ENCODE measurements at regions of chr2 and their contacts with region 1.

Region 1: DNA sequence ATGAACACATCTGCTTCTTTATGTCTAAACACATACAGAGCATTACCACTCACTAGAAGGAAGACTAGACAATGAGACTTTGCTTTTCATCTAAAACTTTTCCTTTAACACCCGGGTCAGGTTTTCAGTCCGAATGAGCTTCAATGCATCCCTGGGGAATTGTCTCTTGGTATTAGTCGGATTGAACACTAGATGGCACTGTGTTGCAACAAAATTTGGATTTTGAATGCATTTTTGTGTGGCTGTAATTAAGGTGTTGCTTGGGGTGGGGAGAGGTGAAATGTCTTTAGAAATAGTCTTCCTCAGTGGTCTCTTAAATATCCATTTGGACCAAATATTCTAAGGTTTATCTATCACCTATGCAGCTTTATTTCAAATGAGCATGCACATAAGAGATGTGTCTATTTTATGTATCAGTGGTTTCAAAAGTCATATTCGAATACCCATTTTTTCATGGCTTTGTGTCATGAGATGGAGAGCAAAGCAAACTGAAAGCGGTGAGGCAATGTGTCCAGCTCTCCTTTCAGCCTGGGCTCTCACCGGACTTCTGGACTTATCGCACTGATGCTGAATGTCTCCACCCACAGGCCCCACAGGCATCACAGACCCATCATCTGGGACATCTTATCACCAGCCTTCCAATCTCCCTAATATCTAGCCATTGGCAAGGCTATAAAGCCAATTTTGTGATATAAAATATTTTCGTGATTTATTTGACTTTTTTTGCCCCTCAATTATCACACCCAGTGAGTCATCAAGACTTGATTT is 510.3 kb downstream of the RNF144A start:
- DNase-seq: no peak
- ATAC-seq: peak; percentile 40
- H3K4me3 Mint-ChIP-seq: no peak overlapping the region
- H3K27ac Mint-ChIP-seq: no peak overlapping the region
- H3K4me1 Mint-ChIP-seq: peaks cover 7% of the 10 kb centered on the region
- H3K27me3 Mint-ChIP-seq: peaks cover 47% of the 10 kb centered on the region
- CTCF ChIP-seq: peak; percentile 19

Region 2: DNA sequence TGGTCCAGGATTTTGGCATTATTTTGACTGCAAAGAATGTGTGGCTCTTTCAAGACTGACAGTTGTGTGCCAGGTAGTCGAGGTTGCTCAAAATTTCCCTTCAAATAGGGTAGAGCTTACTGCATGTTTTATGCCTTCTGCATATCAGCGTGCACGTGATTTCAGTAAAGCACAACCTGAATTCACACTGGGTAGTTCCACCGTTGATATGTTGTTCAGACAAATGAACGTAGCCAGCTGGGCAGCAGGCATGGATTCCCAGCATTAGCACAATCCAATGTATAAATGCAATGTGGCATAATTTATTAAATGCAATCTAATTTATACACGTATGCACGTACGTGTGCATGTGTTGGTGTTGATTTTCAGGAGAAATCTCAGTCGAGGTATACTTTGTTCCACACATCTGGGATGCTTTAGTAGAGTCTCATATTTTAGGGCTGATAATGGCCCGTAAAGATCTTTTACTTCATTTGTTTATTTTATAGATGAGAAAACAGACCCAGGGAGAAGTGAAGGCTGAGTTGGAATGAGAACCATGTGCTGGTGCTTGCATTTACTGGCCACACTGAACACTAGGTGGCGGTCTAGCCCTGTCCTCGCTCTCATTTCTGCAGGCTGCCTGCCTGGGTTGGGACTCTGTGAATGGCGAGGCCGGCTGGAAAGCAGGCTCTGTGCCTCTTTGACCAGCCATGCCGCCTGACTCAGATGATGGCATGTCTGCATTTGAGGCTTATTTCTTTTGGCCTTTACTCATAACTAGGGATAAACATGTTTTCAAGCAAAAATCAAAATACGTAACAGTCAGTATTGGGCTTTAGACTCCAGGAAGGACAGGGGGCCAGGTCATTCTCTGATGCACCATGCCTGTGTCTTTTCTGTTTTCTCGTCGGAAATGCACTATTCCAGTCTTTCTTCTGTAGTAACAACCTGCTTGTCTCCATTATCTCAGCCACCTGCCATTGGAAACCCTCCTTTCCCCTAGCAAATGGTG is 389.8 kb before region 1 on chr2:
- CTCF ChIA-PET with region 1: no interaction called
- POLR2A ChIA-PET with region 1: no interaction called
- intact Hi-C with region 1: loop called (anchors 5 kb)
- DNase-seq: peak; percentile 40
- ATAC-seq: peak; percentile 58
- H3K4me3 Mint-ChIP-seq: no peak overlapping the region
- H3K27ac Mint-ChIP-seq: no peak overlapping the region
- H3K4me1 Mint-ChIP-seq: no peaks in the 10 kb centered on the region
- H3K27me3 Mint-ChIP-seq: no peaks in the 10 kb centered on the region
- CTCF ChIP-seq: peak; percentile 49

Region 3: DNA sequence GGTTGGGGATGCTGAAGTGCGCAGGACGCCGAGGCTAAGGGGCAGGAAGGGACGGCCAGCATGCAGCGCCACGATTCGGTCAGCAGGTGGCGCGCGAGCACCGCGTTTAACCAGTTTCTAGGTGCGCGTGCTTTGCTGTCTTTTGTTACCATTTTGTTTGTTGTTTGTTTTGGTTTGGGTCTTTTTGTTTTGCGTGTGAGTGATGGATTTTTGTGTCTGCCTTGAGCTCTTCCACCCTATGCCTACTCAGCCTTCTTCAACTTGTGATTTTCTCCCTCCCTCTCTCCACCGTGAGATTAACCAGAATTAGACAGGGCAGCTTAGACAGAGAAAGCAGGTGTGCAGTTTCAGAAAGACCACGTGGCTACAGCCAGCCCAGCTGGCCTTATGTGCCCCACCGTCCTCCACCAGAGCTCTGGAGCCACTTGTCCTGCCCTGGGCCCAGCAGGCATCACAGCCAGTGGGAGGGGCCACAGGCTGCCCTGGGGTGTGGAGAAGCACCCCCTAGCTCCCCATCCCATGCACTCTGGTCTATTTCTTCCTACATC is 330.1 kb before region 1 on chr2:
- CTCF ChIA-PET with region 1: interaction called, 3 read pairs
- POLR2A ChIA-PET with region 1: no interaction called
- intact Hi-C with region 1: loop called (anchors 1 kb)
- DNase-seq: peak; percentile 58
- ATAC-seq: peak; percentile 81
- H3K4me3 Mint-ChIP-seq: peak overlapping the region; percentile 33
- H3K27ac Mint-ChIP-seq: no peak overlapping the region
- H3K4me1 Mint-ChIP-seq: peaks cover 11% of the 10 kb centered on the region
- H3K27me3 Mint-ChIP-seq: peaks cover 23% of the 10 kb centered on the region
- CTCF ChIP-seq: peak; percentile 84

Region 4: GRCh38 chr2:7190587-7191324 is 236.7 kb before region 1 on chr2:
- CTCF ChIA-PET with region 1: no interaction called
- POLR2A ChIA-PET with region 1: no interaction called
- intact Hi-C with region 1: no loop called
- DNase-seq: no peak
- ATAC-seq: no peak
- H3K4me3 Mint-ChIP-seq: no peak overlapping the region
- H3K27ac Mint-ChIP-seq: no peak overlapping the region
- H3K4me1 Mint-ChIP-seq: no peaks in the 10 kb centered on the region
- H3K27me3 Mint-ChIP-seq: no peaks in the 10 kb centered on the region
- CTCF ChIP-seq: no peak

Region 5: GRCh38 chr2:7672027-7672684 is 244.7 kb after region 1 on chr2:
- CTCF ChIA-PET with region 1: interaction called, 6 read pairs
- POLR2A ChIA-PET with region 1: no interaction called
- intact Hi-C with region 1: loop called (anchors 1 kb)
- DNase-seq: no peak
- ATAC-seq: no peak
- H3K4me3 Mint-ChIP-seq: no peak overlapping the region
- H3K27ac Mint-ChIP-seq: no peak overlapping the region
- H3K4me1 Mint-ChIP-seq: no peaks in the 10 kb centered on the region
- H3K27me3 Mint-ChIP-seq: peaks cover 3% of the 10 kb centered on the region
- CTCF ChIP-seq: no peak